Naive thymus-derived CD8-positive, alpha-beta T cell (primary cell): ENCODE measurements at regions of chr7 and their contacts with region 1.

Region 1: DNA sequence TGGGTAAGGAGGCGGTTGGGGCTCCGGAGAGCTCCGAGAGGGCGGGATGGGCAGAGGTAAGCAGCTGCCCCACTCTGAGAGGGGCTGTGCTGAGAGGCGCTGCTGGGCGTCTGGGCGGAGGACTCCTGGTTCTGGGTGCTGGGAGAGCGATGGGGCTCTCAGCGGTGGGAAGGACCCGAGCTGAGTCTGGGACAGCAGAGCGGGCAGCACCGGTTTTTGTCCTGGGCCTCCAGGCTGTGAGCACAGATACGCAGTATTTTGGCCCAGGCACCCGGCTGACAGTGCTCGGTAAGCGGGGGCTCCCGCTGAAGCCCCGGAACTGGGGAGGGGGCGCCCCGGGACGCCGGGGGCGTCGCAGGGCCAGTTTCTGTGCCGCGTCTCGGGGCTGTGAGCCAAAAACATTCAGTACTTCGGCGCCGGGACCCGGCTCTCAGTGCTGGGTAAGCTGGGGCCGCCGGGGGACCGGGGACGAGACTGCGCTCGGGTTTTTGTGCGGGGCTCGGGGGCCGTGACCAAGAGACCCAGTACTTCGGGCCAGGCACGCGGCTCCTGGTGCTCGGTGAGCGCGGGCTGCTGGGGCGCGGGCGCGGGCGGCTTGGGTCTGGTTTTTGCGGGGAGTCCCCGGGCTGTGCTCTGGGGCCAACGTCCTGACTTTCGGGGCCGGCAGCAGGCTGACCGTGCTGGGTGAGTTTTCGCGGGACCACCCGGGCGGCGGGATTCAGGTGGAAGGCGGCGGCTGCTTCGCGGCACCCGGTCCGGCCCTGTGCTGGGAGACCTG is 26.0 kb downstream of the PRSS2 start:
- DNase-seq: peak in 5 of 10 donors; percentile 18 to 50 (median 33)
- ATAC-seq: peak in 1 of 2 donors; percentile 6
- H3K4me3 Mint-ChIP-seq: peak overlapping the region; percentile 87 to 100 (median 98)
- H3K27ac Mint-ChIP-seq: peak overlapping the region; percentile 94 to 100 (median 100)
- H3K4me1 Mint-ChIP-seq: peaks cover 50 to 86% (median 71%) of the 10 kb centered on the region in 4 donors
- H3K27me3 Mint-ChIP-seq: no peaks in the 10 kb centered on the region

Region 2: GRCh38 chr7:142301923-142302550 is 494.8 kb before region 1 on chr7:
- POLR2A ChIA-PET with region 1: interaction called, 18 read pairs
- DNase-seq: no peak
- ATAC-seq: peak in 1 of 2 donors; percentile 26
- H3K4me3 Mint-ChIP-seq: peak overlapping the region in 1 of 10 donors; percentile 24
- H3K27ac Mint-ChIP-seq: no peak overlapping the region
- H3K4me1 Mint-ChIP-seq: peaks cover 15 to 36% (median 27%) of the 10 kb centered on the region in 4 donors
- H3K27me3 Mint-ChIP-seq: peaks cover 6 to 27% (median 8%) of the 10 kb centered on the region in 5 donors

Region 3: GRCh38 chr7:142345811-142346210 is 451.0 kb before region 1 on chr7:
- POLR2A ChIA-PET with region 1: interaction called, 22 read pairs
- DNase-seq: peak in 8 of 10 donors; percentile 17 to 76 (median 52)
- ATAC-seq: peak; percentile 92 to 96
- H3K4me3 Mint-ChIP-seq: peak overlapping the region in 9 of 10 donors; percentile 16 to 79 (median 52)
- H3K27ac Mint-ChIP-seq: peak overlapping the region in 8 of 10 donors; percentile 0 to 72 (median 38)
- H3K4me1 Mint-ChIP-seq: peaks cover 7 to 29% (median 12%) of the 10 kb centered on the region in 4 donors
- H3K27me3 Mint-ChIP-seq: peaks cover 0 to 4% (median 1%) of the 10 kb centered on the region in 5 donors

Region 4: DNA sequence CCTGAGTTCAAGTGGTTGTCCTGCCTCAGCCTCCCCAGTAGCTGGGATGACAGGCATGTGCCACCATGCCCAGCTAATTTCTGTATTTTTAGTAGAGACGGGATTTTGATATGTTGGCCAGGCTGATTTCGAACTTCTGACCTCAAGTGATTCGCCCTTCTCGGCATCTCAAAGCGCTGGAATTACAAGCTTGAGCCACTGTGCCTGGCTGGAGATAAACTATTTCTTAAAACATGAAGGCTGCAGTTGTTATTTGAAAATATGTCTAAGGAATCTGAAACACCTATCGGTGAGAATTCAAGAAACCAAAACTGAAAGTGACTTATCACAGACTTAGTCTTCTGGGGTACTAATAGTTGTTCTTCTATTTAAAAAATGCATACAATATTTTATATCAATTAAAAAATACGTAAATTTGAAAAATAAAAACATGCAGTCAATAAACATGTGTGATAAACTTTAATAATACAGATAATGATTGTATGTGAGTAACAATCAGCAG is 362.1 kb before region 1 on chr7:
- POLR2A ChIA-PET with region 1: interaction called, 12 read pairs
- DNase-seq: no peak
- ATAC-seq: peak; percentile 41 to 43
- H3K4me3 Mint-ChIP-seq: peak overlapping the region; percentile 77 to 89 (median 82)
- H3K27ac Mint-ChIP-seq: peak overlapping the region; percentile 28 to 93 (median 85)
- H3K4me1 Mint-ChIP-seq: peaks cover 19 to 42% (median 38%) of the 10 kb centered on the region in 4 donors
- H3K27me3 Mint-ChIP-seq: peaks cover 0 to 3% (median 0%) of the 10 kb centered on the region in 5 donors

Region 5: GRCh38 chr7:142496545-142497041 is 300.2 kb before region 1 on chr7:
- POLR2A ChIA-PET with region 1: interaction called, 26 read pairs
- DNase-seq: peak in 5 of 10 donors; percentile 10 to 42 (median 34)
- ATAC-seq: peak; percentile 27 to 43
- H3K4me3 Mint-ChIP-seq: peak overlapping the region in 9 of 10 donors; percentile 23 to 81 (median 65)
- H3K27ac Mint-ChIP-seq: peak overlapping the region; percentile 51 to 88 (median 72)
- H3K4me1 Mint-ChIP-seq: peaks cover 24 to 59% (median 39%) of the 10 kb centered on the region in 4 donors
- H3K27me3 Mint-ChIP-seq: no peaks in the 10 kb centered on the region

Region 6: DNA sequence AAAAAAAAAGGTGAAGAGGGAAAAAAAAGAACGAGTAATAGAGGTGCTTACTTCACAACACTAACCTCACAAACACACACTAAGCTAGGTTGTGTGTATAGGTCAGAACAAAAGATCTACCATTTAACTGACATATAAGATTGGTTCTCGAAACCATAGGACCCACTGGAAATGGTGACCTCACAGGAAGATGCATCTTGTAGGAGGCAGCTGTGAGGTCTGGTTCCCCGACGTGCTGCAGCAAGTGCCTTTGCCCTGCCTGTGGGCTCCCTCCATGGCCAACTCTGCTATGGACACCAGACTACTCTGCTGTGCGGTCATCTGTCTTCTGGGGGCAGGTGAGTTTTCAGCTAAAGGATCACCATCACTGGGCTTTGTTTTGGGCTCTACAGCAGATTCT is 181.3 kb before region 1 on chr7:
- POLR2A ChIA-PET with region 1: interaction called, 21 read pairs
- DNase-seq: no peak
- ATAC-seq: peak in 1 of 2 donors; percentile 29
- H3K4me3 Mint-ChIP-seq: peak overlapping the region; percentile 38 to 82 (median 70)
- H3K27ac Mint-ChIP-seq: peak overlapping the region; percentile 41 to 92 (median 76)
- H3K4me1 Mint-ChIP-seq: peaks cover 0 to 8% (median 0%) of the 10 kb centered on the region in 4 donors
- H3K27me3 Mint-ChIP-seq: peaks cover 0 to 6% (median 3%) of the 10 kb centered on the region in 5 donors

Region 7: DNA sequence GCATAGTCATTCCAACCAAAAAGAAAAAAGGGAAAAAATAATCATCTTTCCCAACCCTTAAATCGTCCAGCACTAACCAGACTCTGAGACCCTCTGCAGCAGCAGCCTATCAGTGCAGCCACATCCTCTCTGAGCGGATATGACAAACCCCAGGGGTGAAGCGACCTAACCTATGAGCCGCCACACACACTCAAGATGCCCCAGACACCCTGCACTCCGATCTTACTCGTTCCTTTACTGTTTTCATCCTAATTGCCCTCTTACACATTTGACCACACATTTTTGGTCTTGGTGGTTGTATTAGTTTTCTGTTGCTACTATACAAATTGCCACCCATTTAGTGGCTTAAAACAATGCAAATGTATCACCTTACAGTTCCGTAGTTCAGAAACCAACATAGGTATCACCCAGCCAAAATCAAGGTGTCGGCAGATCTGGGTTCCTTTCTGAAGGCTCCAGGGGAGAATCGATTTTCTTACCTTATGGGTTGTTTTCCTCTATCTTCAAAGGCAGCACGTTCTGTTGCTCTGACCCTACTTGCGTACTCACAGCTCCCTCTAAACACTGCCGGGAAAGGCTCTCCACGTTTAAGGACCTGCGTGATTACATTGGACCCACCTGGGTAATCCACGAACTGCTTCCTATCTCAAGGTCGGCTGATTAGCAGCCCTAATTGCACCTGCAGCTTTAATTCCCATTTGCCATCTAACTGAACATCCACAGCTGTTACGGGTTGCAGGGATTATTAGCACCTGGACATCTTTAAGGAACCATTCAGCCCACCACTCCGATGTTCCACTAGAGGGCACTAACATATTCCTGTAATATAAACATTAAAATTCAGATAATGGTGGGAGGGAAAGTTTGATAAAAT is 84.8 kb before region 1 on chr7:
- POLR2A ChIA-PET with region 1: interaction called, 85 read pairs
- DNase-seq: peak in 3 of 10 donors; percentile 15 to 44 (median 29)
- ATAC-seq: peak; percentile 76 to 82
- H3K4me3 Mint-ChIP-seq: peak overlapping the region; percentile 84 to 94 (median 90)
- H3K27ac Mint-ChIP-seq: peak overlapping the region; percentile 89 to 96 (median 95)
- H3K4me1 Mint-ChIP-seq: peaks cover 10 to 79% (median 61%) of the 10 kb centered on the region in 4 donors
- H3K27me3 Mint-ChIP-seq: no peaks in the 10 kb centered on the region

Region 8: DNA sequence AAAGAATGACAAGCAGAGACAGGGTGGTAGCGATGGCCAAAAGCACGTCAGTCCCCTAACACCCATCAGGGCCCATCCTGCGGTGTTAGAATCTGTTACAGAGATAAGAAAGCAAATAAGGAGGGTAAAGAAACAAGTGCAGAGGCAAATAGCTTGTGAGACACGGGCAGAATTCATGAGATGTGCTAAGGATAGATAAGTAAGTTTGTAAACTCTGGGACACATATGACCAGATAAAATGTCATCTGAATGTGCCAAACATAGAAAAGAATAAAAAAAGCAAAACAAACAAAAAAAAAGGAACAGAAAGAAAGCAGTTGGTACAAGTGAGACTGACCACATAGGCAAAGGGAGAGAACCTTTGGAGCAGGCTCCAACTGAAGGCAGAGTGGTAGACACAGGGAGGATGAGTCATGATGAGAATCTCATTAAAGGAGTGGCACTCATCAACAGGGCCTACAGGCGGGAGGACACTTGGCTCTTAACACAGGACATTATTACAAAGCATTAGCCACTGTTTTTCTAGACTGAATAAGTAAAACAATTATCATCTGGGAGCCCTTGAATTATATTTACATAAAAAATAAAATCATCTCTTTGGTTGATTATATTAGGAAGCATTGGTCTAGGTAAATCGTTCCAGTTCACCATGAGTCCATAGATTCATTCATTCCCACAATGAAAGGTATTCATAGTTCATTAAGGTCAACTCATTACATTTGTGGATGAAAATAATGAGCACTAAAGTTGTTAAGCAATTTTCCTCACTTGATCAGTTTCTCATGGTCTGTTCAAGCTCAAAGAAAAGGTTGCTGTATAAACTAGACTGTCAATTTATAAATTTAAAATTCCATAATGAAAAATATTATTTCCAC is 36.6 kb after region 1 on chr7:
- POLR2A ChIA-PET with region 1: no interaction called
- DNase-seq: no peak
- ATAC-seq: no peak
- H3K4me3 Mint-ChIP-seq: peak overlapping the region in 1 of 10 donors; percentile 48
- H3K27ac Mint-ChIP-seq: peak overlapping the region in 6 of 10 donors; percentile 2 to 79 (median 42)
- H3K4me1 Mint-ChIP-seq: peaks cover 10 to 21% (median 15%) of the 10 kb centered on the region in 4 donors
- H3K27me3 Mint-ChIP-seq: peaks cover 0 to 1% (median 0%) of the 10 kb centered on the region in 5 donors